Lower leg skin (tissue), 4 donors: ENCODE measurements at regions of chr6 and their contacts with region 1.

Region 1: GRCh38 chr6:13641315-13641714 is 26.2 kb downstream of the NOL7 start:
- DNase-seq: no peak
- H3K4me3 ChIP-seq: no peak overlapping the region
- CTCF ChIP-seq: no peak
- POLR2A ChIP-seq: no peak

Region 2: DNA sequence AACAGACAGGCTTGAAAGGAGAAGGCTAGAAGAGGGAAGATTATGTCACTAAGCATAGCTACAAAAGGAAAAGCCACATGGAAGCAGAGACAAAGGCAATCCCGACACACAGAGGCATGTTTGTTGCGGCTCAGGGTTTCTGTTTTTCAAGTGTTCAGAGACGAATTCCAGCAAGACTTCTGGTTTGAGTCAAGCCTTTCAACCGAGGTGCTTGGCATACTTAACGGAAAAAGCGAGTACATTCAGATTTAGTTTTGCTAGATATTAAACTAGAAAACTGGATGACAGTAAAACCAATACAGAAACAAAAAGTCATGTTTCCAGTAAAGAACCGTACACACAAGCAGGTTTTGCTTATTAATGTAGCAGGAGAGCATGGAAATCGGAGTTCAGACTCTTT is 145.8 kb after region 1 on chr6:
- intact Hi-C with region 1: loop called (anchors 10 kb)
- DNase-seq: no peak
- H3K4me3 ChIP-seq: no peak overlapping the region
- CTCF ChIP-seq: no peak
- POLR2A ChIP-seq: no peak

Region 3: DNA sequence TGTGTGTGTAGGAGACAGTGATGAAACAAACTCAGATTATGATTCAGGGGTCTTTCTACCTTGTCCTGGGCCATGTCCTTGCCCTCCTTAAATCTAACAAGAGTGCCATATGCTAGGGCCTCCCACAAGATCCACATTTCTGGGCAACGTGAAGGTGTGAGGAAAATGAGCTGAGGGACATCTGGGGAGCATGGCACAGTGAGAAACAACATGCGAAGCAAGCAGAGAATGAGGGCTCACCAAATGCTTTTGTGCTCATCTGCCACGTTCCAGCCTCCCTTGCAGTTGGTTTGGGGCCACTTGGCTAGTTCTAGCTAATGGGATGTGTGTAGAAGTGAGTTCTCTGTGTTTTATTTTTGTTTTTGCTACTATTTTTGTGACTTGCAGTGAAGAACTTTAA is 262.0 kb after region 1 on chr6:
- intact Hi-C with region 1: no loop called
- DNase-seq: no peak
- H3K4me3 ChIP-seq: no peak overlapping the region
- CTCF ChIP-seq: no peak
- POLR2A ChIP-seq: no peak